Activated naive CD4-positive, alpha-beta T cell treated with anti-CD3 and anti-CD28 coated beads for 36 hours (primary cell): ENCODE measurements at regions of chr14 and their contacts with region 1.

Region 1: DNA sequence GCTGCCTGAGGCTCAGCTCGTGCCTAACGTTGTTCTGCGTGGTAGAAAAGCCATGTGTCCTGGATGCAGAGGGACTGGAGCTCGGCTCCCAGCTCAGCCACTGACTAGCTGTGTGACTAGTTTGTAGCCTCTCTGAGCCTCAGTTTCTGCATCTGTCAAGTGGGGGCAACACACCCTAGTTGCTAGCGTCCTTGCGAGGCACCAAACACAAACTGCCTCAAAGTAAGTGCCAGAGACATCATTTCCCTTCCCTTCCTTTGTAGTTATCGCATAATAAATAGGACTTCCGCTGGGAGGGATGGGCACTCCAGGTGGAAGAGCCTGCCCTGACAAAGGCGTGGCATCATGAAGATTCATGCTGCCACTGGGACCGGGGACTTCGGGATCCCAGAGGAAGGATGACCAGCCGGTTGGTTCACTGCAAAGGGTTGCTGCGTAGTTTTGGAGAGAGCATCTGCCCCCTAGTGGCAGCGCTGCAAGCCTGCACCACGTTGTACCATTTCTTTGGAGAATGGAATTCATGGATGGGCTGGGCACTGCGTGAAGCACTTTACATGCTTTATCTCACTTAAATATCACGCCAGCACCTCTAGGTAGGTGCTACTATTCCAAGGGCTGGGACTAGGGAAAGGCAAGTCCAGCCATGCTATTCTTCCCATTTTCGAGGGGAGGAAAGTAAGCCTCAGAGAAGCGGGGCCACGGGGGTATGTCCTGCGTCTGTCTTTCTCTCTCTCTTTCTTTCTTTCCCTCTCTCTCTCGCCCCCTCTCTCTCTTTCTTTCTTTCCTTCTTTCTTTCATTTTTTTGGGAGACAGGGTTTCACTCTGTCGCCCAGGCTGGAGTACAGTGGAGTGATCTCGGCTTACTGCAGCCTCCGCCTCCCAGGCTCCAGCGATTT is 4.6 kb downstream of the CCDC197 start:
- DNase-seq: peak; percentile 71
- H3K4me3 Mint-ChIP-seq: no peak overlapping the region
- H3K27ac Mint-ChIP-seq: no peak overlapping the region
- H3K4me1 Mint-ChIP-seq: peaks cover 17% of the 10 kb centered on the region
- H3K27me3 Mint-ChIP-seq: no peaks in the 10 kb centered on the region

Region 2: GRCh38 chr14:93655078-93655750 is 346.5 kb before region 1 on chr14:
- CTCF ChIA-PET with region 1: no interaction called
- intact Hi-C with region 1: loop called (anchors 10 kb)
- DNase-seq: peak; percentile 18
- H3K4me3 Mint-ChIP-seq: no peak overlapping the region
- H3K27ac Mint-ChIP-seq: no peak overlapping the region
- H3K4me1 Mint-ChIP-seq: no peaks in the 10 kb centered on the region
- H3K27me3 Mint-ChIP-seq: peaks cover 16% of the 10 kb centered on the region

Region 3: DNA sequence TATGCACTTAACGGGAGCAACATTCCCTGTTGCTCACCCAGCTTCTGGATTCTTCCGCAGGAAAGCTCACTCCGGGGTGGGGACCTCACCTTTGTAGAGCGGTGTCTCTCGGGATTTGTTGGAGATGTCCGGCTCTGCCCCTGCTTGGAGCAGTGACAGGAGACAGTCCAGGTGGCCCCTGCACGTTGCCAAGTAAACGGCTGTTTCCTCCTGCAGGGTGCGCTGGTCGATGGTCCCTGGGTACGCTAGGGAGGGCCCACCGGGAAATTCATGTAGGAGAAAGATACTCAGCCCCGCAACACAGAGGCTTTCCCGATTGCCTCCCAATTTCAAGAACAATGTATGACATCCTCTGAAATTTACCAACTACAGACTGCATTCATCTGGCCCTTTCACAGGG is 48.5 kb before region 1 on chr14:
- CTCF ChIA-PET with region 1: interaction called, 10 read pairs
- intact Hi-C with region 1: no loop called
- DNase-seq: no peak
- H3K4me3 Mint-ChIP-seq: no peak overlapping the region
- H3K27ac Mint-ChIP-seq: no peak overlapping the region
- H3K4me1 Mint-ChIP-seq: peaks cover 68% of the 10 kb centered on the region
- H3K27me3 Mint-ChIP-seq: no peaks in the 10 kb centered on the region

Region 4: GRCh38 chr14:93970549-93970946 is 31.2 kb before region 1 on chr14:
- CTCF ChIA-PET with region 1: interaction called, 53 read pairs
- intact Hi-C with region 1: loop called (anchors 1 kb)
- DNase-seq: peak; percentile 84
- H3K4me3 Mint-ChIP-seq: peak overlapping the region; percentile 71
- H3K27ac Mint-ChIP-seq: peak overlapping the region; percentile 85
- H3K4me1 Mint-ChIP-seq: peaks cover 47% of the 10 kb centered on the region
- H3K27me3 Mint-ChIP-seq: peaks cover 2% of the 10 kb centered on the region

Region 5: DNA sequence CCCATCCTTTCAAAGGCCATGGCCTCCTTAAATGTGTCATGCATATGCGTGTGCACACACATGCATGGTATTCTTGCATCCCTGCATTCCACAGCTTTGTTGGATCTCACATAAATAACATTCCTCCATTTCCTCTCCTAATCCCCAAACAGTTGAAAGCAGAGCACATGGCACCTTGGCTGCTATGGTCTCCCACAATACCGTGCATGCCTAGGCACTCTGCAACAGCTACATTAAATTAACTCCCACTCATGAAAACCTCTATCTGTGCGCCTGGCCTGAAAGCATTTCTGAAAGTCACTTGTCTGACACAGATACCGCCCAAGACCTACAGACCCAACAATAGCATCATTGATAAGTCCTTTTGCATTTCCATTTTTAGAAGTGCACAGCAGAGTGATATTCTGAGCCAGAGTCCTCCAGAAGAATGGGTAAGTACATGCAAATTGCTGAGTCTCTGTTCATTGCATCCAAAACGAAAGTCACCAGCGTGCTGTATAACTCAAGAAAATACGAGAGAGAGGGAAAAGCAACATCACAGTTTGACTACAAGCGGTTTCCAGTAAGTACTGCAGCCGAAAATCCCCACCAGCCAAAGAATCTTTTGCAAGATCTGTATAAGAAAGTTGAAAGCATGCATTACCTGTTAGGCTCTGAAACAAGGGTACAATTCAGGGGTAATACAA is 25.8 kb before region 1 on chr14:
- CTCF ChIA-PET with region 1: interaction called, 53 read pairs
- intact Hi-C with region 1: loop called (anchors 1 kb)
- DNase-seq: peak; percentile 65
- H3K4me3 Mint-ChIP-seq: peak overlapping the region; percentile 55
- H3K27ac Mint-ChIP-seq: peak overlapping the region; percentile 95
- H3K4me1 Mint-ChIP-seq: peaks cover 85% of the 10 kb centered on the region
- H3K27me3 Mint-ChIP-seq: no peaks in the 10 kb centered on the region

Region 6: DNA sequence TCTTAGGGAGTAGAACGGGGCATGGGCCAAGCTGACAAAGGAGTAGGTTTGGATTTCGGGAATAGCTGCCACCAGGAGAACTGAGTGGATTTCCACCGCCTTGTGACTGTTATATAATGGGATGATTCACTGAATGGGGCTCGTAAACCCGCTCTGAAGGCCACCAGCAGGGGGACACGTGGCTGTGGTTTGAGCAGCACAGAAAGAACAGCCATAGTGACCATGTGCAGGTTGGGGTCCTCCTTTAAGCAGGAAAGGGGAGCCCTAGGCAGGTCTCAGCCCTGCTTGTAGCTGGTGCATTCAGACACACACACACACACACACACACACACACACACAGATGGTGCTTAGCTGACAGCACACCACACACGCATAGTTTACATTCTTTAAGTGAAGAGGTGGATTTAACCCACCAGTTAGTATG is 16.8 kb before region 1 on chr14:
- CTCF ChIA-PET with region 1: interaction called, 24 read pairs
- intact Hi-C with region 1: no loop called
- DNase-seq: no peak
- H3K4me3 Mint-ChIP-seq: no peak overlapping the region
- H3K27ac Mint-ChIP-seq: no peak overlapping the region
- H3K4me1 Mint-ChIP-seq: peaks cover 10% of the 10 kb centered on the region
- H3K27me3 Mint-ChIP-seq: no peaks in the 10 kb centered on the region

Region 7: GRCh38 chr14:94239406-94239805 is 237.7 kb after region 1 on chr14:
- CTCF ChIA-PET with region 1: no interaction called
- intact Hi-C with region 1: no loop called
- DNase-seq: no peak
- H3K4me3 Mint-ChIP-seq: no peak overlapping the region
- H3K27ac Mint-ChIP-seq: no peak overlapping the region
- H3K4me1 Mint-ChIP-seq: peaks cover 10% of the 10 kb centered on the region
- H3K27me3 Mint-ChIP-seq: no peaks in the 10 kb centered on the region